Right ventricle myocardium superior (tissue), 1 donor: ENCODE measurements at regions of chr12 and their contacts with region 1.

Region 1: DNA sequence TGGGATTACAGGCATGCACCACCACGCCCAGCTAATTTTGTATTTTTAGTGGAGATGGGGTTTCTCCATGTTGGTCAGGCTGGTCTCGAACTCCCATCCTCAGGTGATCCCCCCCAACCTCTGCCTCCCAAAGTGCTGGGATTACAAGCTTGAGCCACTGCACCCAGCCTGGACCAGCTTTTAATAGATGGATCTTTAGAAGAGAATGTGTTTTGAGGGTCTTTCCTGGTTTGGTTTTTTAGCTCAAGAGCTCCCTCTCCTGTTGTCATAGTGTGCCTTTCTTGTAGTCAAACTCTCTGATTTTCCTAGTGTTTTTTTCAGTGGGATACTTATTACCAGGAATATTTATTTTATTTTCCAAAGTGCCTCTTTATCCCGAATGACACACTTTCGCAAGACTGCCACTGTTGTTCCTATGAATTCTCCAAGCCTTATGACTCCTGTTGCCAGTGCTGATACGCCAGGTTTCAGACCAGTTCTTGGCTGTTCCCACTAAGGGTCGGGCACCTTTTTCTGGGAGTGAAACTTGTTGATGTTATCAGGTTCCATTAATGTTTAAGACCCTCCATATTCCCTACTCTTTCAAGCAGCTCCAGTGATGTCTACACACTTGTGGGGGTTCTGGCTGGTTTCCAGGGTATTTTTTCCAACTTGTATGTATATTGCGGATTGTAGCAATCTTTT is 31.5 kb upstream of the LIMA1 start:
- DNase-seq: no peak
- ATAC-seq: peak; percentile 43

Region 2: GRCh38 chr12:50187084-50187900 is 127.5 kb before region 1 on chr12:
- intact Hi-C with region 1: loop called (anchors 10 kb)
- DNase-seq: no peak
- ATAC-seq: no peak

Region 3: GRCh38 chr12:50211392-50212070 is 103.2 kb before region 1 on chr12:
- intact Hi-C with region 1: loop called (anchors 10 kb)
- DNase-seq: no peak
- ATAC-seq: peak; percentile 27

Region 4: DNA sequence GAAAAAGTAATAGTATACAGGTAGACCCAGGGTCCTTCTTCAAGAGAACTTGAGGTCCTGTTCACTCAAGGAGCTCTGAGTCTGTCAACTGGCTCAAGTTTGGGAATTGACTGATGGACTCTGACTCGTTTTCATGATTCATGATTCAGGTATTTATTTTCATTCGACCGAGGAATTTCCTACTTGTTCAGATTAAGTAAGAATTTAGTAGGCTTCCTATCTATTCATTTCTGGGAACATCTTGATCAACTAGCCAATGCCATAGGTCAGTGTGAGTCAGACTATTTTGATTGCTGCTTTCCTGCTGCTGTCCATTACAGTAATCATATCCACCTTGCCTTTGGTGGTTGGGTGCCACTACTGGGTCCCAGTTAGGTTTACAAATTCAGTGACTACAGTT is 75.5 kb after region 1 on chr12:
- intact Hi-C with region 1: no loop called
- DNase-seq: no peak
- ATAC-seq: no peak